Heart right ventricle (tissue), 16 donors: ENCODE measurements at regions of chr17 and their contacts with region 1.

Region 1: GRCh38 chr17:1390433-1391367 is 9.3 kb downstream of the YWHAE start:
- DNase-seq: peak in 1 of 2 donors; percentile 46
- ATAC-seq: peak; percentile 57 to 89 (median 83)
- H3K4me3 ChIP-seq: peak overlapping the region in 6 of 10 donors; percentile 1 to 23 (median 7)
- H3K27ac ChIP-seq: peak overlapping the region; percentile 16 to 81 (median 61)
- H3K4me1 ChIP-seq: peaks cover 24 to 100% (median 98%) of the 10 kb centered on the region in 9 donors
- H3K27me3 ChIP-seq: no peaks in the 10 kb centered on the region
- CTCF ChIP-seq: no peak

Region 2: GRCh38 chr17:1347589-1348323 is 42.9 kb before region 1 on chr17:
- intact Hi-C with region 1: no loop called
- DNase-seq: peak in 1 of 2 donors; percentile 44
- ATAC-seq: peak; percentile 53 to 84 (median 74)
- H3K4me3 ChIP-seq: peak overlapping the region in 6 of 10 donors; percentile 10 to 30 (median 26)
- H3K27ac ChIP-seq: peak overlapping the region in 8 of 10 donors; percentile 36 to 78 (median 58)
- H3K4me1 ChIP-seq: peaks cover 3 to 46% (median 32%) of the 10 kb centered on the region in 9 donors
- H3K27me3 ChIP-seq: no peaks in the 10 kb centered on the region
- CTCF ChIP-seq: no peak

Region 3: GRCh38 chr17:1374431-1375177 is 16.1 kb before region 1 on chr17:
- intact Hi-C with region 1: loop called in 1 of 10 experiments (anchors 1 kb)
- DNase-seq: no peak
- ATAC-seq: no peak
- H3K4me3 ChIP-seq: no peak overlapping the region
- H3K27ac ChIP-seq: no peak overlapping the region
- H3K4me1 ChIP-seq: peaks cover 16 to 99% (median 90%) of the 10 kb centered on the region in 9 donors
- H3K27me3 ChIP-seq: no peaks in the 10 kb centered on the region
- CTCF ChIP-seq: no peak